ENCODE measurements at regions of chr2 and their contacts with region 1.

Region 1: GRCh38 chr2:120680136-120680761 is 55.4 kb upstream of the GLI2 start:
- DNase-seq: peak; percentile 84 to 93 (median 90)
- H3K4me3 ChIP-seq: no peak overlapping the region
- H3K27ac ChIP-seq: no peak overlapping the region
- H3K4me1 ChIP-seq: no peaks in the 10 kb centered on the region
- H3K27me3 ChIP-seq: peaks cover 0 to 31% (median 5%) of the 10 kb centered on the region in 5 experiments

Region 2: DNA sequence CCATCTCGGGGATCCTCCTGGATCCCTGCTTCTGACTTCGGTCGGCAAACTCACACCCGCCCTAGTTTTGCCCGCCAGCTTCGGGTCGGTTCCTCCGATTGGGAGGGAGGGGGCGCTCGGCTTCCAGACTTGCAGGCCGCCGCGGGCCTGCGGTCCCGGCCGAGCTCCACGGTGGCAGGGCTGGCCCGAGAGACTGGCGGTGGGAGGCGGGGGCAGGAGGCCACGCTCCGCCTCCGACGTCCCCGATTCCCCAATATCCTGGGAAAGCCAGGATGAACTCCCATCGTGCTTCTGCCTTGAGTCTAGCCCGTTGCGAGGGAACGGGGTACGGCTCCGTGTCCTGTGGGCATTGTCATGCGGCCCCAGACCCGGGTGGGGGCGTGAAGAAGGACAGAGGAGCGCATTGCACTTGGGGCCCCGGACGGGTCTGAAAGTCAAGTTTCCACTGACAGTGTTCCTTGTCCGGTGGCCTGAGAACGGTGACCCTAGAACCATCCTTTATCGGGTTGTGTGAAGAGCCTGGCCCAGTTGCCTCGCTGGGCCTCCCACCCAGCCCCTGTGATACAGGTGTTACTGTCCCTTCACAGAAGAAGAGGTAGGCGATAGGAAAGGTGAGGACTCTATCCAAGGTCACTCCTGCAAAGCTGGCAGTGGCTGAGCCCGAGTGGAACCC is 336.7 kb before region 1 on chr2:
- CTCF ChIA-PET with region 1: interaction called, 12 read pairs
- POLR2A ChIA-PET with region 1: no interaction called
- DNase-seq: peak; percentile 77 to 85 (median 85)
- H3K4me3 ChIP-seq: peak overlapping the region in 3 of 7 experiments; percentile 11 to 45 (median 19)
- H3K27ac ChIP-seq: no peak overlapping the region
- H3K4me1 ChIP-seq: peaks cover 0 to 45% (median 29%) of the 10 kb centered on the region in 4 experiments
- H3K27me3 ChIP-seq: peaks cover 0 to 96% (median 43%) of the 10 kb centered on the region in 5 experiments

Region 3: GRCh38 chr2:120661551-120661950 is 18.7 kb before region 1 on chr2:
- CTCF ChIA-PET with region 1: no interaction called
- POLR2A ChIA-PET with region 1: no interaction called
- DNase-seq: no peak
- H3K4me3 ChIP-seq: no peak overlapping the region
- H3K27ac ChIP-seq: no peak overlapping the region
- H3K4me1 ChIP-seq: no peaks in the 10 kb centered on the region
- H3K27me3 ChIP-seq: peaks cover 0 to 36% (median 4%) of the 10 kb centered on the region in 5 experiments

Region 4: DNA sequence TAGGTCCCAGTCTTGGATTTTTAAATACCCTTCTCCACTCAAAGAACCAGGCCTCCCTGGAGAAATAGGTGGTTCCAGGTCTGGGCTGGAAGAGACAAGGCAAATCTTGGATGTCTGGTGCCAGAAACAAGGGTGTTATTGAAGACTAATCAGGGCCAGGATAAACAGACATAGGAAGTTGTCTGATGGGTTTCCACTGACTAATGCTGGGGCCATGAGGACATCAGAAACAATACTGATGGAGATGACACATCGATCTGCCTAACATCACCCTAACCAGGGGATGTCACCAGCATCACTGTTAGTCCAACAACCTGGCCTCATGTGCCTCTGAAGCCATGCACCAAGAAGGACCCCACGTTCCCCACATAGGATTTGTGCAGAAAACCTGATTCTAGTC is 12.9 kb after region 1 on chr2:
- CTCF ChIA-PET with region 1: interaction called, 21 read pairs
- POLR2A ChIA-PET with region 1: no interaction called
- DNase-seq: no peak
- H3K4me3 ChIP-seq: no peak overlapping the region
- H3K27ac ChIP-seq: no peak overlapping the region
- H3K4me1 ChIP-seq: peaks cover 0 to 8% (median 0%) of the 10 kb centered on the region in 4 experiments
- H3K27me3 ChIP-seq: peaks cover 8 to 52% (median 15%) of the 10 kb centered on the region in 5 experiments